ENCODE measurements at regions of chr19 and their contacts with region 1.

Region 1: GRCh38 chr19:8654591-8655339 is 24.3 kb downstream of the NFILZ start:
- DNase-seq: peak; percentile 77
- ATAC-seq: peak; percentile 86
- H3K4me3 Mint-ChIP-seq: no peak overlapping the region
- H3K27ac Mint-ChIP-seq: no peak overlapping the region
- H3K4me1 Mint-ChIP-seq: peaks cover 17% of the 10 kb centered on the region
- H3K27me3 Mint-ChIP-seq: no peaks in the 10 kb centered on the region
- CTCF ChIP-seq: peak; percentile 98

Region 2: GRCh38 chr19:8487137-8487851 is 167.5 kb before region 1 on chr19:
- CTCF ChIA-PET with region 1: no interaction called
- POLR2A ChIA-PET with region 1: no interaction called
- intact Hi-C with region 1: no loop called
- DNase-seq: peak; percentile 81
- ATAC-seq: peak; percentile 83
- H3K4me3 Mint-ChIP-seq: peak overlapping the region; percentile 12
- H3K27ac Mint-ChIP-seq: peak overlapping the region; percentile 93
- H3K4me1 Mint-ChIP-seq: peaks cover 40% of the 10 kb centered on the region
- H3K27me3 Mint-ChIP-seq: no peaks in the 10 kb centered on the region
- CTCF ChIP-seq: no peak

Region 3: GRCh38 chr19:8641908-8642547 is 12.7 kb before region 1 on chr19:
- CTCF ChIA-PET with region 1: interaction called, 12 read pairs
- POLR2A ChIA-PET with region 1: no interaction called
- intact Hi-C with region 1: no loop called
- DNase-seq: peak; percentile 21
- ATAC-seq: no peak
- H3K4me3 Mint-ChIP-seq: no peak overlapping the region
- H3K27ac Mint-ChIP-seq: no peak overlapping the region
- H3K4me1 Mint-ChIP-seq: peaks cover 5% of the 10 kb centered on the region
- H3K27me3 Mint-ChIP-seq: peaks cover 5% of the 10 kb centered on the region
- CTCF ChIP-seq: peak; percentile 63

Region 4: GRCh38 chr19:8684001-8684902 is 29.5 kb after region 1 on chr19:
- CTCF ChIA-PET with region 1: interaction called, 12 read pairs
- POLR2A ChIA-PET with region 1: no interaction called
- intact Hi-C with region 1: no loop called
- DNase-seq: no peak
- ATAC-seq: no peak
- H3K4me3 Mint-ChIP-seq: no peak overlapping the region
- H3K27ac Mint-ChIP-seq: no peak overlapping the region
- H3K4me1 Mint-ChIP-seq: peaks cover 13% of the 10 kb centered on the region
- H3K27me3 Mint-ChIP-seq: no peaks in the 10 kb centered on the region
- CTCF ChIP-seq: no peak